Posterior vena cava (tissue), 2 donors: ENCODE measurements at regions of chr10 and their contacts with region 1.

Region 1: GRCh38 chr10:14833106-14833505 is 4.7 kb downstream of the CDNF start:
- DNase-seq: no peak

Region 2: DNA sequence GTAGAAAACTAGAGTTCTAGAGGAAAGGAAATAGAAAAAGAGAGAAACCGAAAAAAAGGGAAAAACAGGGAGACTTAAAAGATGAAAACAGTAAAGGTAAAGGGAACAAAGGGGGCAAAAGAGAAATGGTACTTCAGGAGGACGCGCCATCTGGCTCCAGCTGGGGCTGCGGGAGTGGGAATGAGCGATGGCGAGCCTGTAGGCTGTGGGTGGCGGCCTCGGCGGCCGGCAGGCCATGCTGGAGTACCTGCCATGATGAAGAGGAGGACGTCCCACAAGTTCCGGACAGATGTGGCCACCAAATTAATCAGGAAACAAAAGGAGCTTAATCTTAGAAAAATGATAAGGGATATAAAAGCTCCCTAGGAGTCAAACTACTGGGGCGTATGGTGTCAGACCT is 1511.5 kb before region 1 on chr10:
- intact Hi-C with region 1: loop called in 1 of 2 experiments (anchors 5 kb)
- DNase-seq: no peak

Region 3: DNA sequence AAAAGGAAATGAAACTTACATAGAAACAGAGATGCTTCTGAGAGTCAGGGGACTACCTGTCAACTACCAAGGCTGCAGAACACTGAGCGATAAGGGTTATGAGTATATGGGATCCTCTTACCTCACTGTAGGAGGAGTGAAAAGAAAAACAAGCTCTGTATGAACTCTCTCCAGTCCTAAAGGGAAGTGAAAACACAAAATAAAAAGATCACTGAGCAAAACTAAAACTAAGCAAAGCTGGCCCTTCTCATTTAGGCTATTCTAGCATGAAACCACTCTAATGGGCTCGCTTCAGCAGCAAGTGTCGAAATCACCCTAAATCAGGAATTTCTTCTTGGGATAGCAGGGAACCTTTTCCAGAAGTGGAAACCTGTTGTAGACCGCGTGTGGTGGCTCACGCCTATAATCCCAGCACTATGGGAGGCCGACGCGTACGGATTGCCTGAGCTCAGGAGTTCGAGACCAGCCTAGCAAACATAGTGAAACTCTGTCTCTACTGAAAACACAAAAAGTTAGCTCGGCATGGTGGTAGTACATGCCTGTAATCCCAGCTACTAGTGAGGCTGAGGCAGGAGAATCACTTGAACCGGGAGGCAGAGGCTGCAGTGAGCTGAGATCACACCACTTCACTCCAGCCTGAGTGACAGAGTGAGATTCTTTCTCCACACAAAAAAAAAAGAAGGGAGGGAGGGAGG is 93.8 kb after region 1 on chr10:
- intact Hi-C with region 1: no loop called
- DNase-seq: no peak

Region 4: GRCh38 chr10:14959276-14960057 is 126.4 kb after region 1 on chr10 and contains the start of gene MEIG1:
- intact Hi-C with region 1: no loop called
- DNase-seq: peak; percentile 98
- total RNA-seq, gene MEIG1: not detected